Activated T-helper 1 cell treated with anti-CD3 and anti-CD28 coated beads, Interleukin-12 subunit alpha, Interleukin-12 subunit beta, Interleukin-2, Interleukin-4 antibody, amounts not matched to agents 30 ng/mL and 10 ng/mL and 1 ng/mL, durations not matched to agents 14 hours and 24 hours and 36 hours (primary cell): ENCODE measurements at regions of chr2 and their contacts with region 1.

Region 1: DNA sequence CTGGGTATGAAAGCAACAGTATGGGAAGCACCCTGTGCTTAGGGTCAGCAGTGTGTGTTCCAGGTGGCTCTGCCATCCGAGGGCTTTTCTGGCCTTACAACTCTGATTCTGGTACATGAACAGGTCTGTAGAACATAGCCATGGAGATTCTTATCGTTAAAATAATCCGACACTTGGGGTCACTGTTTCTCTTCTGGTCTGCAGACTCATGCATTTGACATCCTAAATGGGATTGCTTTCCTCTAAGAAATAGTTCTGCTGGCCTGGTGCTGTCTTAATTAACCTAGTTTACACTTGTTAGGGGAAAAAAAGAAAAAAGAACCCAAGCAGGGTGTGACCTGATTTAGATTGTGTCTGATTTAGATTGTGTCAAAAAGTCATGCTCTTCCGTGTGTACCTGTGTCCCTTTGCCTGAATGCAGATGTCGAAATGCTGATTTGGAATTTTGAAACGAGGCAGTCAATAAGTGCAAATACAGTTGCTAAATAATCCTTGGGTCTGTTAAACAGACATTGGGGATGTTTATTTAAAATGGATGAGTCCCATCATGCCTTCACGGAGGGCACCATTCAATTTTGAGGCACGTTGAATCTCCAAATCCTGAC is 59.6 kb downstream of the TRPM8 start:
- DNase-seq: peak; percentile 12
- H3K4me3 Mint-ChIP-seq: no peak overlapping the region
- H3K27ac Mint-ChIP-seq: no peak overlapping the region
- H3K4me1 Mint-ChIP-seq: peaks cover 39% of the 10 kb centered on the region
- H3K27me3 Mint-ChIP-seq: peaks cover 10% of the 10 kb centered on the region

Region 2: GRCh38 chr2:234121999-234122398 is 145.2 kb after region 1 on chr2:
- intact Hi-C with region 1: loop called (anchors 5 kb)
- DNase-seq: no peak
- H3K4me3 Mint-ChIP-seq: no peak overlapping the region
- H3K27ac Mint-ChIP-seq: no peak overlapping the region
- H3K4me1 Mint-ChIP-seq: no peaks in the 10 kb centered on the region
- H3K27me3 Mint-ChIP-seq: peaks cover 20% of the 10 kb centered on the region

Region 3: DNA sequence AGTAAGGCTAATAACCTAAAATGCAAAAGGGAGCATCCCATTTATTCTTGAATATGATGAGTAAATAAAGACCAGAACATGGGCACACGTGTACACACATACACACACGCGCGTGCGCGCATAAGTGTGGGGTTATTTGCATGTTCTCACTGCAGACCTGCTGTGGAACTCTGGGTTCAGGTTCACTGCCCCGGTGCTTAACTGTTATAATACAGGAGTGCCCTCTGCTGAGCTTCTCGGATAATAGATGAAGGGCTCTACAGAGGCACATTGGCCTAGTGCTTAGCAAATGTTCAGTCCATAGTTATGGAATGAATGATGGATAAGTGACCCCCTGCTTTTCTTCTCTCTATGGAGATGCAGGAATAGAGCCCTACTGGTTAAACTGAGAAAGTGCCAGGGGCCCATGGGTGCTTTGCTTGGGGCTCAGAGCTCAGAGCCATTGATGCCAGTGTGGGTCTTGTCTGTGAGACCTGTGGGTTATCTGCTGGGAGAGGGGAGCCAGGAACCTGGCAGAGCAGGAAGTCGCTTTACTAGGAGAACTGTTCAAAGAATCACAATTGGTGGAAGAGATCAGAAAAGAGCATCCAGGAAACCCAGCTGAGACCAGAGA is 523.7 kb after region 1 on chr2:
- intact Hi-C with region 1: loop called (anchors 1 kb)
- DNase-seq: peak; percentile 72
- H3K4me3 Mint-ChIP-seq: peak overlapping the region; percentile 58
- H3K27ac Mint-ChIP-seq: peak overlapping the region; percentile 34
- H3K4me1 Mint-ChIP-seq: peaks cover 32% of the 10 kb centered on the region
- H3K27me3 Mint-ChIP-seq: peaks cover 13% of the 10 kb centered on the region

Region 4: DNA sequence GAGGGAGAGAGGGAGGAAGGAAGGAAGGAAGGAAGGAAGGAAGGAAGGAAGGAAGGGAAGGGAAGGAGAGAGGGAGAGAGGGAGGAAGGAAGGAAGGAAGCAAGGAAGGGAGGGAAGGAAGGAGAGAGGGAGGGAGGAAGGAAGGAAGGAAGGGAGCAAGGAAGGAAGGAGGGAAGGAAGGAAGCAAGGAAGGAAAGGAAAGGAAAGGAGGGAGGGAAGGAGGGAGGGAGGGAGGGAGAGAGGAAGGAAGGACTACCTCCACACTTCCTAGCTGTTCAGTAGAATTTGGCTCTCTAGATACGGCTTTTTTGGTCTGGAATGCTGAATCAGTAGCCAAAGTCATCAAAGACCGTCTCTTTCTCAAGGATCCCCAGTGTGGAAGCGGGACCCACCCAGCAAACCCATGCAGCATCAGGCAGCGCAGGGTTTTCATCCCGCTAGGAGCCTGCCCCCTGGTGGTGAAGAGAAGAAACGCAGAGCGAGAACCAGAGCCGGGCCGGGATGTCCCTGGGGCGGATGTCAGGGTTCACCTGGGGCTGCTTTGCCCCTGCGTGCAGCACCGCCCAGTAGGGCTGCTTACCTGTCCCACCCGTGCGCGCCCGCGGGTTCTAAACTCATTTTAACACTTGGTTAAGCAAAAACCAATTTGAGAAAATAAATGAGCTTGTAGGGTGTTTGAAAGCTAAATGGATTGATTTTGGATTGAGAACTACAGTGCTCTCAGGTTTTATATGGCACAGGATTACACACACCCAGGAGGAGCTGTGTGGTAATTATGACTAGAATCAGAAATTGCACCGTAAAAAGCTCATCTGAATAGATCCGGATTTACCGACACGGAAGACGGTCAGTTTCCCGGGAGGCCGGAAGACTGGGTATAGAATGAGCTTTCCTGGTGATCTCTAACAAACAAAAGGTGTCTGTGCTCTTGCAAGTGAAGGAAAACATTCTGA is 568.1 kb after region 1 on chr2:
- intact Hi-C with region 1: loop called (anchors 1 kb)
- DNase-seq: peak; percentile 70
- H3K4me3 Mint-ChIP-seq: no peak overlapping the region
- H3K27ac Mint-ChIP-seq: no peak overlapping the region
- H3K4me1 Mint-ChIP-seq: peaks cover 5% of the 10 kb centered on the region
- H3K27me3 Mint-ChIP-seq: peaks cover 15% of the 10 kb centered on the region